Activated CD4-positive, alpha-beta memory T cell treated with anti-CD3 and anti-CD28 coated beads for 36 hours (primary cell): ENCODE measurements at regions of chr16 and their contacts with region 1.

Region 1: GRCh38 chr16:67514382-67514828 is 14.2 kb upstream of the RIPOR1 start:
- DNase-seq: peak; percentile 89
- H3K4me3 Mint-ChIP-seq: no peak overlapping the region
- H3K27ac Mint-ChIP-seq: peak overlapping the region; percentile 35
- H3K4me1 Mint-ChIP-seq: peaks cover 7% of the 10 kb centered on the region
- H3K27me3 Mint-ChIP-seq: no peaks in the 10 kb centered on the region

Region 2: GRCh38 chr16:67499106-67499505 is 15.3 kb before region 1 on chr16:
- CTCF ChIA-PET with region 1: interaction called, 128 read pairs
- POLR2A ChIA-PET with region 1: no interaction called
- intact Hi-C with region 1: loop called (anchors 1 kb)
- DNase-seq: no peak
- H3K4me3 Mint-ChIP-seq: no peak overlapping the region
- H3K27ac Mint-ChIP-seq: no peak overlapping the region
- H3K4me1 Mint-ChIP-seq: peaks cover 9% of the 10 kb centered on the region
- H3K27me3 Mint-ChIP-seq: no peaks in the 10 kb centered on the region

Region 3: GRCh38 chr16:67504041-67505021 is 10.1 kb before region 1 on chr16:
- CTCF ChIA-PET with region 1: interaction called, 128 read pairs
- POLR2A ChIA-PET with region 1: no interaction called
- intact Hi-C with region 1: no loop called
- DNase-seq: peak; percentile 76
- H3K4me3 Mint-ChIP-seq: no peak overlapping the region
- H3K27ac Mint-ChIP-seq: peak overlapping the region; percentile 82
- H3K4me1 Mint-ChIP-seq: peaks cover 42% of the 10 kb centered on the region
- H3K27me3 Mint-ChIP-seq: no peaks in the 10 kb centered on the region